ENCODE measurements at regions of chr2 and their contacts with region 1.

Region 1: DNA sequence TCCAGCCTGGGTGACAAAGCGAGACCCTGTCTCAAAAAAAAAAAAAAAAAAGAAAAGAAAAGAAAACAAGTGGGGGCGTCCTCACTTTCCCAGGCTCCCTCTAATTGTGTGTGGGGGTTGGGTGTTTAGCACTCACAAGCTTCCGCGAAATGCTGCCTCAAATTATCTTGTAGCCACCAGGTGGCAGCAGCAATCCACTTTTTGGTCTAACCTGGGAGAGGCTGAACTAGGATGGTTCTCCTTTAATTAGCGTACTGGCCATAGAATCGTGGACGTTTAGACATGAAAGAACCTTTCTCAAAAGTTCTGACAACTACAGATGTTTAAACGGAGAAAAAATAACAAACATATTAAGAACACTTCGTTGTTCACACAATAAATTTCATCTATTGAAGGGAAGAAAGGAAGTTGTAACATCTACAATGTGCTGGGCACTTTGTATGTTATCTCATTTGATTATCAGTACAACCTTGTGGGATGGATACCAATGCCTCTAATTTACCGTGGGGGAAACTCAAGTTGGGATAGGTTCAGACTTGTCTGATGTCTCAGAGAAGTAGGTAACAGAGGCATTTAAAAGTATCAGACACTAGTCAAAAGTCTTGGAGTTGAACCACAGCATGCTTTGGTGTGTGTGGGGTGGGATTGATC is 122.7 kb upstream of the NABP1 start:
- DNase-seq: peak; percentile 71 to 81 (median 77)
- ATAC-seq: peak; percentile 77 to 93 (median 89)
- H3K4me3 ChIP-seq: no peak overlapping the region
- H3K27ac ChIP-seq: no peak overlapping the region
- H3K4me1 ChIP-seq: peaks cover 0 to 3% (median 0%) of the 10 kb centered on the region in 12 donors
- H3K27me3 ChIP-seq: peaks cover 0 to 8% (median 0%) of the 10 kb centered on the region in 9 donors
- CTCF ChIP-seq: peak; percentile 62 to 79 (median 70)
- POLR2A ChIP-seq: no peak

Region 2: GRCh38 chr2:191691016-191691735 is 136.0 kb after region 1 on chr2:
- intact Hi-C with region 1: loop called in 4 of 10 experiments (anchors 1 to 5 kb)
- DNase-seq: peak in 2 of 5 donors; percentile 30 to 35
- ATAC-seq: peak; percentile 64 to 84 (median 74)
- H3K4me3 ChIP-seq: no peak overlapping the region
- H3K27ac ChIP-seq: no peak overlapping the region
- H3K4me1 ChIP-seq: peaks cover 0 to 23% (median 4%) of the 10 kb centered on the region in 12 donors
- H3K27me3 ChIP-seq: peaks cover 0 to 6% (median 0%) of the 10 kb centered on the region in 9 donors
- CTCF ChIP-seq: peak; percentile 50 to 86 (median 72)
- POLR2A ChIP-seq: no peak

Region 3: GRCh38 chr2:192162392-192163042 is 607.3 kb after region 1 on chr2:
- intact Hi-C with region 1: loop called in 8 of 10 experiments (anchors 1 to 10 kb)
- DNase-seq: peak in 3 of 5 donors; percentile 57 to 63 (median 63)
- ATAC-seq: peak; percentile 64 to 89 (median 80)
- H3K4me3 ChIP-seq: peak overlapping the region in 7 of 12 donors; percentile 8 to 36 (median 22)
- H3K27ac ChIP-seq: peak overlapping the region in 1 of 12 donors; percentile 21
- H3K4me1 ChIP-seq: peaks cover 0 to 10% (median 0%) of the 10 kb centered on the region in 12 donors
- H3K27me3 ChIP-seq: peaks cover 0 to 4% (median 0%) of the 10 kb centered on the region in 9 donors
- CTCF ChIP-seq: peak; percentile 81 to 97 (median 94)
- POLR2A ChIP-seq: no peak

Measured in heart left ventricle (tissue), 16 donors.